Dendritic cell treated with granulocyte-macrophage colony-stimulating factor and Interleukin-4, amounts not matched to agents 40 ng/mL and 50 ng/mL, for 4 days (primary cell): ENCODE measurements at regions of chr15 and their contacts with region 1.

Region 1: DNA sequence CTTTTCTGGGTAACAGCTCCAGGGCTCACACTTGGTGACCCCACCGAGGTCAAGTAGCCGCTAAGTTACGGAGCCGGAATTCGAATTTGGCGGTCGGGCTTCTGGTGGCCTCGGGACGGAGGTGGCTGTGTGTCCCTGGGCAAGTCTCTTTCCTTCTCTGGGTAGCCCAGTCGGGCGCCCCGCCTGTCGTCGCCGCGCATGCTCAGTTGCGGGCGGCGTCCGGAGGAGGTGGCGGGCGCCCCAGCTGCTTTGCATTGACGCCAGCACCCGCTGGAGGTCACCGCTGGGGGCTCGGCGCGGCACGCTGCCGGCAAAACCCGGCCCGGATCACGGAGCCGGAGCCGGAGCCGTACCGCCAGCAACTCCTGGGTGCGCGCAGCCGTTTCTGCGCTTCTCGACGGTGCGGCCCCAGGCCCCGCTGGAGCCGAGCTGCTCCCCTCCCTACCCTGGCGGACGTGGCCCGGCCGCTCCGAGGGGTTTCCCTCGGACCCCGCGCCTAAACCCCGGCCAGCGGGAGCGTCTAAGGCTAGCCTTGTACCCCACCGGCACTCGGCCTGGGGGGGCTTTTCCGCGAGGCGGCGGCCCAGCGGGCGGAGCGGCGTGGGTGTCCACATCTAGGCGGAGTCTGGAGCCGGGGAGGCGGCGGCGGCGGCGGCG is 474 bp upstream of the PDE8A start:
- H3K4me3 Mint-ChIP-seq: peak overlapping the region; percentile 97
- H3K27ac Mint-ChIP-seq: peak overlapping the region; percentile 84
- H3K4me1 Mint-ChIP-seq: peaks cover 28% of the 10 kb centered on the region
- H3K27me3 Mint-ChIP-seq: peaks cover 16% of the 10 kb centered on the region

Region 2: GRCh38 chr15:84633311-84634227 is 347.6 kb before region 1 on chr15:
- intact Hi-C with region 1: loop called (anchors 10 kb)
- H3K4me3 Mint-ChIP-seq: peak overlapping the region; percentile 86
- H3K27ac Mint-ChIP-seq: peak overlapping the region; percentile 83
- H3K4me1 Mint-ChIP-seq: peaks cover 46% of the 10 kb centered on the region
- H3K27me3 Mint-ChIP-seq: no peaks in the 10 kb centered on the region

Region 3: GRCh38 chr15:84725001-84725491 is 256.1 kb before region 1 on chr15:
- intact Hi-C with region 1: no loop called
- H3K4me3 Mint-ChIP-seq: peak overlapping the region; percentile 42
- H3K27ac Mint-ChIP-seq: peak overlapping the region; percentile 93
- H3K4me1 Mint-ChIP-seq: peaks cover 81% of the 10 kb centered on the region
- H3K27me3 Mint-ChIP-seq: no peaks in the 10 kb centered on the region

Region 4: DNA sequence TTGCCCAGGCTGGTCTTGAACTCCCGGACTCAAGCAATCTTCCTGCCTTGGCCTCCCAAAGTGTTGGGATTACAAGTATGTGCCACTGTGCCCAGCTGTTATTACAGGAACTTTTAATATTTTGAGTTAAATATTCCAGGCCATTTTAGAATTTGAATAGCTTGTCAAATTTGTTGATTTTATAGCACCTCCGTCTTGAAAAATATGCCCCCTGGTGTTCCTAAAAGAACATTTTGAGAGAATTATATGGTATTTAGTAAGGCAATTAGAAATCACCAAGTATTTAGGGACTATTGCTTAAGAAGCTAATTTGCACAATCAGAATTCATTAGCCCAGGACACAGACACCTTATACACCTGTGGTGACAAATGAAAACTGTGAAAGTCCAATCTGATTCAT is 24.1 kb after region 1 on chr15:
- intact Hi-C with region 1: loop called (anchors 2 kb)
- H3K4me3 Mint-ChIP-seq: no peak overlapping the region
- H3K27ac Mint-ChIP-seq: peak overlapping the region; percentile 81
- H3K4me1 Mint-ChIP-seq: peaks cover 88% of the 10 kb centered on the region
- H3K27me3 Mint-ChIP-seq: no peaks in the 10 kb centered on the region

Region 5: GRCh38 chr15:85019815-85020590 is 38.8 kb after region 1 on chr15:
- intact Hi-C with region 1: loop called (anchors 5 kb)
- H3K4me3 Mint-ChIP-seq: no peak overlapping the region
- H3K27ac Mint-ChIP-seq: no peak overlapping the region
- H3K4me1 Mint-ChIP-seq: peaks cover 40% of the 10 kb centered on the region
- H3K27me3 Mint-ChIP-seq: no peaks in the 10 kb centered on the region

Region 6: GRCh38 chr15:85044251-85044853 is 63.2 kb after region 1 on chr15:
- intact Hi-C with region 1: loop called (anchors 10 kb)
- H3K4me3 Mint-ChIP-seq: no peak overlapping the region
- H3K27ac Mint-ChIP-seq: no peak overlapping the region
- H3K4me1 Mint-ChIP-seq: peaks cover 12% of the 10 kb centered on the region
- H3K27me3 Mint-ChIP-seq: no peaks in the 10 kb centered on the region